GM12878 (cell line): ENCODE measurements at regions of chr1 and their contacts with region 1.

Region 1: GRCh38 chr1:12124693-12125421 is 41.9 kb upstream of the TNFRSF1B start:
- DNase-seq: no peak
- ATAC-seq: peak; percentile 67
- H3K4me3 ChIP-seq: no peak overlapping the region
- H3K27ac ChIP-seq: no peak overlapping the region
- H3K4me1 ChIP-seq: no peaks in the 10 kb centered on the region
- H3K27me3 ChIP-seq: no peaks in the 10 kb centered on the region
- CTCF ChIP-seq: peak; percentile 89 to 95 (median 89)
- EP300 ChIP-seq: no peak
- POLR2A ChIP-seq: no peak
- RAD21 ChIP-seq: peak; percentile 94

Region 2: GRCh38 chr1:12143631-12144155 is 18.8 kb after region 1 on chr1:
- CTCF ChIA-PET with region 1: interaction called, 24 read pairs
- POLR2A ChIA-PET with region 1: interaction called, 5 read pairs
- RAD21 ChIA-PET with region 1: interaction called, 42 read pairs
- SMC1A ChIA-PET with region 1: interaction called, 50 read pairs
- in situ Hi-C with region 1: no loop called
- intact Hi-C with region 1: no loop called
- DNase-seq: no peak
- ATAC-seq: peak; percentile 27
- H3K4me3 ChIP-seq: no peak overlapping the region
- H3K27ac ChIP-seq: peak overlapping the region; percentile 60
- H3K4me1 ChIP-seq: peaks cover 52% of the 10 kb centered on the region
- H3K27me3 ChIP-seq: no peaks in the 10 kb centered on the region
- CTCF ChIP-seq: peak in 1 of 3 experiments; percentile 21; a peak in 2 of 6 replicates
- EP300 ChIP-seq: no peak
- POLR2A ChIP-seq: peak; percentile 52; the same call in 1 of the 2 replicates
- RAD21 ChIP-seq: no peak

Region 3: GRCh38 chr1:12166834-12167492 is 42.1 kb after region 1 on chr1 and contains the start of gene TNFRSF1B:
- CTCF ChIA-PET with region 1: interaction called, 29 read pairs
- POLR2A ChIA-PET with region 1: interaction called, 3 read pairs
- RAD21 ChIA-PET with region 1: interaction called, 25 read pairs
- SMC1A ChIA-PET with region 1: interaction called, 18 read pairs
- in situ Hi-C with region 1: no loop called
- intact Hi-C with region 1: no loop called
- DNase-seq: no peak
- ATAC-seq: peak; percentile 72
- H3K4me3 ChIP-seq: peak within 1 kb of the TSS; percentile 91
- H3K27ac ChIP-seq: peak within 1 kb of the TSS; percentile 82
- H3K4me1 ChIP-seq: peaks cover 47% of the 10 kb centered on the region
- H3K27me3 ChIP-seq: no peaks in the 10 kb centered on the region
- CTCF ChIP-seq: no peak
- EP300 ChIP-seq: no peak
- POLR2A ChIP-seq: peak; percentile 98
- RAD21 ChIP-seq: no peak
- polyA plus RNA-seq, gene TNFRSF1B: 10.1 to 11.6 TPM

Region 4: DNA sequence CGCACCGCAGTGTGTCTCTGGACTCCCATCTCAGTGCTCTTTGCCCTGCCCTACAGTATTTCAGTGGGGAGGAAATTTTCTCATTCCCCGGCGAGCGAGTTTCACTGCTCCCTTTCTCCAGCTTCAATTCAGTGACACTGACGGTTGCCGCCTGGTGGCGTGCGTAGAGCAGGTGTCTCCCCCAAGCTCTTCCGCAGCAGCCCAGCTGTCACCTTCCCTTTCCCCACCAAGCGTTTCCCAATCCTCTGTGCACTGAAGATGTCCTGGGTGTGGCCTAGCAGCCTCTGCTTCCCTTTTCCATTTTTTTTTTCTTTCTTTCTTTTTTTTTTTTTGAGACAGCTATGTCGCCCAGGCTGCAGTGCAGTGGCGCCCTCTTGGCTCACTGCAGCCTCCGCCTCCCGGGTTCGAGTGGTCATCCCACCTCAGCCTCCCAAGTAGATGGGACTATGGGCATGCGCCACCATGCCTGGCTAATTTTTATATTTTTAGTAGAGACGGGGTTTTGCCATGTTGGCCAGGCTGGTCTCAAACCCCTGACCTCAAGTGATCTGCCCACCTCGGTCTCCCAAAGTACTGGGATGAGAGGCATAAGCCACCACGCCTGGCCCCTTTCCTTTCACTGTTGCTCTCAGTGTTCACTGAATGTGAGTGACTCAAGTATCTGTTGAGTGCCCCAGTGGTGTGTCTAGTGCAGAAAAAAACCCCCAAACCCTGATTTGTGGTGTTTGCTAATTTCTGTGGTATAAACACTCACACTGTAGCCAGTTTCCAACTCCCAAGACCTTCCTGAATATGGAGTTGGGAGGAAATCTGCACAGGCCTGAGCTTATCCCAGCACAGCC is 72.0 kb after region 1 on chr1:
- CTCF ChIA-PET with region 1: interaction called, 104 read pairs
- POLR2A ChIA-PET with region 1: no interaction called
- RAD21 ChIA-PET with region 1: interaction called, 84 read pairs
- SMC1A ChIA-PET with region 1: interaction called, 191 read pairs
- in situ Hi-C with region 1: no loop called
- intact Hi-C with region 1: no loop called
- DNase-seq: no peak
- ATAC-seq: peak; percentile 37
- H3K4me3 ChIP-seq: no peak overlapping the region
- H3K27ac ChIP-seq: peak overlapping the region; percentile 9; the same call in 1 of the 2 replicates
- H3K4me1 ChIP-seq: peaks cover 40% of the 10 kb centered on the region
- H3K27me3 ChIP-seq: no peaks in the 10 kb centered on the region
- CTCF ChIP-seq: peak in 2 of 3 experiments; percentile 15 to 34; a peak in 3 of 6 replicates
- EP300 ChIP-seq: no peak
- POLR2A ChIP-seq: no peak
- RAD21 ChIP-seq: no peak

Region 5: DNA sequence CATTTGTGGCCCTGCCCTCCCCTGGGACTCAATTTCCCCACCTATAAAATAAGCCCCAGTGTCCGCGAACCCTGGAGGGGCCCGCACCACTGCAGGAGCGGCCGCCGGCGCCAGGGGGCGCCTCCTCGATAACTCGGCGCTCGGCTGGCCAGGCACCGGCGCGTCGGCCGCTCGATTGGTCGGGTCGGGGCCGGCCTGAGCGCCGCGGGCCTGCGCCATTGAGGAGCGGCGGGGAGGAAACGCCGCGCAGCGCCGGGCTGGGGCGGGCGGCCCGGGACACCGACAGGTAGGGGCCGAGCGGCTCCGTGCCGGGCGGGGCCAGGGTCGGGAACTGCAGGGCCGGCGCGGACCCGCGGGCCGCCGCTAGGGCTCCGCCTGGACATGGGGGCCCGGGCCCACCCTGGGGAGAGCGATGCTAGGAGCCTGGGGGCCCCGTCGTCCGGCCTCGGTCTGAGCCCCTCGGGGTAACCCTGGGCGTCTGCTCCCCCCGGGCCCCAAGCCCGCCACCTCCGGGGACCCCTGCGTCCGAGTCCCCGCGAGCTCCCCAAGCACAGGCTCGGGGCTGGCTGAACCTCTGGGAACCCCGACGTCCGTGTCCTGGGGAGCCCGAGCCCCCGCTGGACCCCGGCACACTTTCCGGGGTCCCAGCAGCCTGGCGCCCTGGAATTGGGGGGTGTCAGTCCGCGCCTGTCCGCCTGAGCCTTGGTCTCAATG is 105.1 kb after region 1 on chr1 and contains the start of gene VPS13D:
- CTCF ChIA-PET with region 1: interaction called, 25 read pairs
- POLR2A ChIA-PET with region 1: no interaction called
- RAD21 ChIA-PET with region 1: interaction called, 11 read pairs
- SMC1A ChIA-PET with region 1: interaction called, 19 read pairs
- in situ Hi-C with region 1: no loop called
- intact Hi-C with region 1: no loop called
- DNase-seq: peak; percentile 5
- ATAC-seq: peak; percentile 97
- H3K4me3 ChIP-seq: peak within 1 kb of the TSS; percentile 88
- H3K27ac ChIP-seq: 0 out of 2 replicates have a peak within 1 kb of the TSS, but pooled peaks have one; percentile 14
- H3K4me1 ChIP-seq: no peaks in the 10 kb centered on the region
- H3K27me3 ChIP-seq: no peaks in the 10 kb centered on the region
- CTCF ChIP-seq: peak; percentile 89 to 98 (median 98)
- EP300 ChIP-seq: no peak
- POLR2A ChIP-seq: peak; percentile 75
- RAD21 ChIP-seq: peak; percentile 39; the same call in 1 of the 2 replicates
- polyA plus RNA-seq, gene VPS13D: 1.4 to 1.7 TPM

Region 6: DNA sequence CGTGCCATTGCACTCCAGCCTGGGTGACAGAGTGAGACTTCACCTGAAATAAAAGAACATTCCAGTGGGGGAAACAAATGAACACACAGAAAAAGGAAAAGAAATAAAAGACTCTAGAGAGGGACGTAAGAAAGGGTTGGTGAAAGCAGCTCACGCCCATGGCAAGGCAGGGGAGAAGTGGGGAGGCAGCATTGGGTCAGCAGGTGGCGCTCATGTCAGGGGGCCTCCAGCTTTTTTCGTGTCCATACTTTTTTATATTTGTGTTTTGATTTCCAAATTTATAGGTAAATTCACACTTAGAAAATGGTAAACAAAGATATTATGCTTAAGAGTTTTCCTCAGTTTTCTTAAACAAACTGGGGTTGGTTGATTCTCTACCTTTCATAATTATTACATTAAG is 150.5 kb after region 1 on chr1:
- CTCF ChIA-PET with region 1: interaction called, 14 read pairs
- POLR2A ChIA-PET with region 1: interaction called, 4 read pairs
- RAD21 ChIA-PET with region 1: interaction called, 9 read pairs
- SMC1A ChIA-PET with region 1: interaction called, 9 read pairs
- in situ Hi-C with region 1: no loop called
- intact Hi-C with region 1: no loop called
- DNase-seq: no peak
- ATAC-seq: peak; percentile 53; the same call in 1 of the 3 replicates
- H3K4me3 ChIP-seq: no peak overlapping the region
- H3K27ac ChIP-seq: no peak overlapping the region
- H3K4me1 ChIP-seq: no peaks in the 10 kb centered on the region
- H3K27me3 ChIP-seq: no peaks in the 10 kb centered on the region
- CTCF ChIP-seq: peak; percentile 56 to 67 (median 60)
- EP300 ChIP-seq: no peak
- POLR2A ChIP-seq: no peak
- RAD21 ChIP-seq: peak; percentile 44